Posterior cingulate gyrus (tissue), 11 donors: ENCODE measurements at regions of chr11 and their contacts with region 1.

Region 1: GRCh38 chr11:117143871-117144476 is at the start of gene PAFAH1B2:
- DNase-seq: peak; percentile 91 to 99 (median 96)

Region 2: GRCh38 chr11:117020287-117020686 is 123.7 kb before region 1 on chr11:
- intact Hi-C with region 1: no loop called
- DNase-seq: no peak

Region 3: DNA sequence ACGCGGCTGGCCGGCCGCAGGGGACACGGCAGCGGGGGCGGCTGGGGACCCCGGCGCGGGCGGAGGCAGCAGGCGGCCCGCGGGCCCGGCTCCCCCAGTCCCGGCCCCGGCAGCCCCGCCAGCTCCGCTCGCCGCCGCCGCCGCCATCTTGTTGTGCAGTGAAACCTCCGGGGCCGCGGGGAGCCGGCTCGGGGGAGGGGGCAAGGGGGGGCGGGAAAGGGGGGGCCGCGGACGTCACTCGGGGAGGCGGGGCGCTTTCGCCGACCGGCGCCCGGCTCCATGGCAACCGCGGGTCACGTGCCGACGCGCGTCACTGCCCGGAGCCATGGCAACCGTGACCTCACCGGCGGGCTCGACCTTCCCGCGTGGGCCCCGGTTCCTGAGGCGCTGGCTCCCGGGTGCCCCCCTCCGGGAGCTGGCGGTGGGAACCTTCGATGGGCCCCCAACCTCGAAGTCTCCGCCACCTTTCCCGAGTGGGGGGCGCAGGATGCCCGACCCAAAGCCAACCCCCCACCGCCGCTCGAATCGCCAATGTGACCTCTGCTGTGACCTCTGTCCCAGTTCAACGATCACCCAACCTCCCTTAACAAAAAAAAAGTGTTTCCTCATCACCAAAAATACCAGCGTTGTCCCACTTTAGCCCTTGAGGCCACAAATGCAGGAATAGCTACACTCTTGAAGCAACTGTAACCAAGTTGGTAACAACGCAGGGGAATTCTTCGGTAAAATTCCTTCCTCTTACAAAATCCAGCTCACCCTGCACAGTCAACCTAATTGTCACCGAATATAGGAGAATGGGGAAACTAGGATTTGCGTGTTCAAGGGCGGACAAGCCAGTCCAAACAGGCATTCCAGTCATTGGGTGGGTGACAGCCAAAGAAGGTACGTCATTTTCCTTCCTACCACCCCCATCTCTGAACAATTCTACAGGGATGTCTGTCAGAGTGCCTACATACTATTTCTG is 45.4 kb before region 1 on chr11 and contains the start of gene SIK3:
- intact Hi-C with region 1: no loop called
- DNase-seq: peak; percentile 92 to 100 (median 96)

Region 4: DNA sequence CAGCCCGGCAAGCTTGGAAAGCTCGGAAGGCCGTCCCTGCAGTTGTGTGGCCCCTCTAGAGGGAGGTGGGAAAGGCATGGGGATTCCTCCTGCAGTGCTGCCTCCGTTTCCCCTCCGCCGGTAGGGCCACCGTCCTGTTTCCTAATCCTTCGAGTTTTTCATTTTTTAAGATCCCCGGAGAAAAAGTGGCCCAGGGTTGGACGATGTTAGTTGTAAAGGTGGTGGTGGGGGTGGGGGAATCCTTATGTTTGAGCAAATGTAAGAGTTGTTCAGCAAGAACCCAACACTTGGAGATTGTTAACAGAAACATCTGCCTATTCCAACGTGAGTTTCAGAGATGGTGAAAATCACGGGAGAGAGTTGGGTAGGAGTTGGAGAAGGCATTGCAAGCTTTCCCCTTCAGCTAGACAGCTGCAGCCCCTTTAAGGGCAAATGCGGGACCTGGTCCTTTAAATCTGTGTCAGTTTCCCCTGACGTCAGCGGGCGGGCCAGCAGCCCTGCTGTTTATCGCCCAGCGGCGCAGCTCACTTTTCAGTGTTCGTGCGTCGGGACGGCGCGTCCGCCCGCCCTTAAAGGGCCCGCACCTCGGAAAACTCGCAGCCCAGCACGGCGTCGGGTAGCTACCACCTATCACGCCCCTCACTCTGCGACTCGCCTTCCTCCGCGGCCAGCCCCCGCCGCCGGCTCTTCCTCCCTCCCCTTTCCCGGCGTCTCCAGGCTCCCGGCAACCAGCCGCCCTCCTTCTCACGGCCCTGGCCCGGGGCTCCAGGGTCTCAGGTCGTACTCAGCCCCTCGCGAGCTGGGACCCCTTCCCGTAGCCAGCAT is 34.4 kb after region 1 on chr11 and contains the start of gene SIDT2:
- intact Hi-C with region 1: loop called (anchors 5 kb)
- DNase-seq: peak; percentile 91 to 99 (median 96)